ENCODE measurements at regions of chr2 and their contacts with region 1.

Region 1: GRCh38 chr2:200306196-200306930 is at the start of gene SPATS2L:
- DNase-seq: peak; percentile 23 to 57 (median 31)
- H3K4me3 ChIP-seq: peak within 1 kb of the TSS; percentile 48 to 55
- H3K4me3 Mint-ChIP-seq: peak within 1 kb of the TSS; percentile 84 to 100 (median 93)
- H3K27ac ChIP-seq: no peak within 1 kb of the TSS
- H3K27ac Mint-ChIP-seq: peak within 1 kb of the TSS; percentile 21 to 91 (median 77)
- H3K4me1 ChIP-seq: peaks cover 4% of the 10 kb centered on the region
- H3K4me1 Mint-ChIP-seq: peaks cover 7 to 18% (median 10%) of the 10 kb centered on the region in 4 donors
- H3K27me3 ChIP-seq: no peaks in the 10 kb centered on the region
- H3K27me3 Mint-ChIP-seq: peaks cover 0 to 4% of the 10 kb centered on the region in 2 donors
- total RNA-seq, gene SPATS2L: 5.9 to 6.6 TPM

Region 2: GRCh38 chr2:199985625-199986207 is 320.6 kb before region 1 on chr2:
- CTCF ChIA-PET with region 1: interaction called, 4 read pairs
- POLR2A ChIA-PET with region 1: no interaction called
- intact Hi-C with region 1: loop called (anchors 5 kb)
- DNase-seq: peak; percentile 42 to 58 (median 50)
- H3K4me3 ChIP-seq: no peak overlapping the region
- H3K4me3 Mint-ChIP-seq: no peak overlapping the region
- H3K27ac ChIP-seq: no peak overlapping the region
- H3K27ac Mint-ChIP-seq: no peak overlapping the region
- H3K4me1 ChIP-seq: no peaks in the 10 kb centered on the region
- H3K4me1 Mint-ChIP-seq: peaks cover 0 to 9% (median 5%) of the 10 kb centered on the region in 4 donors
- H3K27me3 ChIP-seq: no peaks in the 10 kb centered on the region
- H3K27me3 Mint-ChIP-seq: no peaks in the 10 kb centered on the region

Region 3: GRCh38 chr2:200275295-200276013 is 30.9 kb before region 1 on chr2:
- CTCF ChIA-PET with region 1: no interaction called
- POLR2A ChIA-PET with region 1: no interaction called
- intact Hi-C with region 1: no loop called
- DNase-seq: no peak
- H3K4me3 ChIP-seq: no peak overlapping the region
- H3K4me3 Mint-ChIP-seq: no peak overlapping the region
- H3K27ac ChIP-seq: no peak overlapping the region
- H3K27ac Mint-ChIP-seq: no peak overlapping the region
- H3K4me1 ChIP-seq: no peaks in the 10 kb centered on the region
- H3K4me1 Mint-ChIP-seq: peaks cover 0 to 2% (median 0%) of the 10 kb centered on the region in 4 donors
- H3K27me3 ChIP-seq: no peaks in the 10 kb centered on the region
- H3K27me3 Mint-ChIP-seq: peaks cover 4 to 6% of the 10 kb centered on the region in 2 donors

Region 4: DNA sequence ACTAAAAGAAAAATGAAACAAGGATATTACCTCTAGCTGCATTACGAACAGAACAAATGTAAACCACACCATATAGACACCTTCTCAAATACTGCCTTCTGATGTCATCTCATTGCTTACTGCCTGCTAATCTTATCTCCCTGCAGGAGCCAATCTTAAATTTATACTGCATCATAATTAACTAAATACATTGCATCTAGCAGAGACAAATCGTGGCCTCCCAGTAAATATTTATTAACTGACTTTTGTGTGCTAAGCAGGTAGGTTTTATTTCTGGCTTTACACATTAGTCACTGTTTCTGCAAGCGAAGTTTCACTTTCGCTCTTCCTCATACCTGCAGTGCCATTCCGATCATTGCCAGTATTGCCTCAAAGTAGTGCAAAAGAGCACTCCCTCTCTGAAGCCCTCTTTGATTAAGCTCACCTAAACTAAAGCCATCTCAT is 67.6 kb after region 1 on chr2:
- CTCF ChIA-PET with region 1: interaction called, 4 read pairs
- POLR2A ChIA-PET with region 1: interaction called, 4 read pairs
- intact Hi-C with region 1: loop called (anchors 2 kb)
- DNase-seq: peak; percentile 52 to 62 (median 58)
- H3K4me3 ChIP-seq: peak overlapping the region; percentile 31 to 34
- H3K4me3 Mint-ChIP-seq: peak overlapping the region; percentile 82 to 93 (median 86)
- H3K27ac ChIP-seq: peak overlapping the region; percentile 48
- H3K27ac Mint-ChIP-seq: peak overlapping the region; percentile 75 to 96 (median 94)
- H3K4me1 ChIP-seq: peaks cover 47% of the 10 kb centered on the region
- H3K4me1 Mint-ChIP-seq: peaks cover 28 to 55% (median 43%) of the 10 kb centered on the region in 4 donors
- H3K27me3 ChIP-seq: no peaks in the 10 kb centered on the region
- H3K27me3 Mint-ChIP-seq: no peaks in the 10 kb centered on the region

Region 5: DNA sequence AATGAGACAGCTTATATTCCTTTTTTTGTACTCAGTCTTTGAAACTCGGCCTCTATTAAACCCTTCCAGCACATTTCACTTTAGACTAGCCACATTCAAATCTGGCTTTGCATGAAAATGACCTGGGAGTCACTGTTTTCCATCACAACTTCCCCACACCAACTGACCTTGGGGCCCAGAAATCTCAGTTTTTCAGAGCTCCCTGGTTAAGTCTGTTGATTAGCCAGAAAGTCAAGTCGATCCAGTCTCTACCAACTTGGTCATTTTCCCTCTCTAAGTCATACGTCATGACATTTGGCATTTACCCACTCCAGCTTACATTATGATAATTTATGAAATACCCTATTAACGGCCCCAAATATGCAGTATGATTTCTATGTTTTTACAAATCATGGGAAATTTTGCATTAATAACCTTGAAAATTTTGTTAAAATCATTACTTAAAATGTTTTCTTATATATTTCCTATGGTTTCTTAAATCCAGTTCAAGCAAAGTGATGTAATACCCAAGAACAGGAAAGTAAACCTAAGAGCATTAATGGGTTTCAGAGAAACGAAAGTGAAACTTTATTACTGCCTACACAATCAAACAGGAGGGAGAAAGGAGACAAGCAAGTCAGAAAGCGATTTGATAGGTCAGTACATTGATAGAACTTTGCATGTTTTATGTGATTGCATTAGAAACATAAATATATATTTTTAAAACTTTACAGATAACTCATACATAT is 77.2 kb after region 1 on chr2:
- CTCF ChIA-PET with region 1: interaction called, 3 read pairs
- POLR2A ChIA-PET with region 1: interaction called, 3 read pairs
- intact Hi-C with region 1: loop called (anchors 2 kb)
- DNase-seq: peak in 4 of 5 donors; percentile 36 to 58 (median 54)
- H3K4me3 ChIP-seq: no peak overlapping the region
- H3K4me3 Mint-ChIP-seq: peak overlapping the region; percentile 14 to 84 (median 64)
- H3K27ac ChIP-seq: peak overlapping the region; percentile 24
- H3K27ac Mint-ChIP-seq: peak overlapping the region in 6 of 7 donors; percentile 10 to 88 (median 54)
- H3K4me1 ChIP-seq: peaks cover 14% of the 10 kb centered on the region
- H3K4me1 Mint-ChIP-seq: peaks cover 8 to 27% (median 21%) of the 10 kb centered on the region in 4 donors
- H3K27me3 ChIP-seq: no peaks in the 10 kb centered on the region
- H3K27me3 Mint-ChIP-seq: no peaks in the 10 kb centered on the region

Measured in CD4-positive, alpha-beta memory T cell (primary cell).